Heart left ventricle (tissue), 16 donors: ENCODE measurements at regions of chr6 and their contacts with region 1.

Region 1: GRCh38 chr6:68975064-68975463 is 340.0 kb downstream of the ADGRB3 start:
- DNase-seq: peak in 4 of 5 donors; percentile 25 to 54 (median 37)
- ATAC-seq: peak; percentile 84 to 93 (median 88)
- H3K4me3 ChIP-seq: no peak overlapping the region
- H3K27ac ChIP-seq: no peak overlapping the region
- H3K4me1 ChIP-seq: peaks cover 0 to 8% (median 0%) of the 10 kb centered on the region in 12 donors
- H3K27me3 ChIP-seq: no peaks in the 10 kb centered on the region
- CTCF ChIP-seq: peak; percentile 11 to 57 (median 44)
- POLR2A ChIP-seq: no peak

Region 2: GRCh38 chr6:68868646-68869045 is 106.4 kb before region 1 on chr6:
- intact Hi-C with region 1: no loop called
- DNase-seq: no peak
- ATAC-seq: no peak
- H3K4me3 ChIP-seq: no peak overlapping the region
- H3K27ac ChIP-seq: no peak overlapping the region
- H3K4me1 ChIP-seq: no peaks in the 10 kb centered on the region
- H3K27me3 ChIP-seq: no peaks in the 10 kb centered on the region
- CTCF ChIP-seq: no peak
- POLR2A ChIP-seq: no peak

Region 3: GRCh38 chr6:69138893-69139494 is 163.9 kb after region 1 on chr6:
- intact Hi-C with region 1: loop called in 1 of 10 experiments (anchors 10 kb)
- DNase-seq: peak in 4 of 5 donors; percentile 20 to 64 (median 44)
- ATAC-seq: peak; percentile 86 to 90 (median 86)
- H3K4me3 ChIP-seq: peak overlapping the region in 7 of 12 donors; percentile 8 to 36 (median 23)
- H3K27ac ChIP-seq: peak overlapping the region; percentile 32 to 85 (median 73)
- H3K4me1 ChIP-seq: peaks cover 0 to 19% (median 2%) of the 10 kb centered on the region in 12 donors
- H3K27me3 ChIP-seq: no peaks in the 10 kb centered on the region
- CTCF ChIP-seq: no peak
- POLR2A ChIP-seq: no peak

Region 4: GRCh38 chr6:69155467-69155866 is 180.4 kb after region 1 on chr6:
- intact Hi-C with region 1: loop called in 2 of 10 experiments (anchors 10 kb)
- DNase-seq: no peak
- ATAC-seq: no peak
- H3K4me3 ChIP-seq: no peak overlapping the region
- H3K27ac ChIP-seq: no peak overlapping the region
- H3K4me1 ChIP-seq: no peaks in the 10 kb centered on the region
- H3K27me3 ChIP-seq: no peaks in the 10 kb centered on the region
- CTCF ChIP-seq: peak in 1 of 12 donors; percentile 9
- POLR2A ChIP-seq: no peak

Region 5: DNA sequence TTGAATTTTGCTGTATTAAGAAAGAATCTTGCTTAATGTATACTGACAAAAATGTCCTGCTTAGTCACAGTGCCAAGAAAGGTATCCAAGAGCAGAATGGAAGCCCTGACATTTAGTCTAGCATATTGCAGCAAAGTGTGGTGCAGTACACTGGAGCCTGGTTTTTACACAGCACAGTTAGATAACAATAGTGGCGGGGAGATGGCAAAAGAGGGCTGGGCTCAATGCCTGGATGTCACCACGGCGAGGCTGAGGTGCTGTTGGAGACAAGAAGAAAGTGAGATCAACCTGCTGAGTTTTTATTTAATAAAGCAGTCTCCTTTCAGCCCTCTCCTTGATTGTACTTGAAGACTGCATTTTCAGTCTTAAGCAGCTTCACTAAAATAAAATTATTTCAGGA is 395.7 kb after region 1 on chr6:
- intact Hi-C with region 1: loop called in 1 of 10 experiments (anchors 5 kb)
- DNase-seq: peak in 4 of 5 donors; percentile 33 to 59 (median 48)
- ATAC-seq: peak; percentile 78 to 98 (median 94)
- H3K4me3 ChIP-seq: no peak overlapping the region
- H3K27ac ChIP-seq: no peak overlapping the region
- H3K4me1 ChIP-seq: peaks cover 0 to 6% (median 0%) of the 10 kb centered on the region in 12 donors
- H3K27me3 ChIP-seq: no peaks in the 10 kb centered on the region
- CTCF ChIP-seq: no peak
- POLR2A ChIP-seq: no peak

Region 6: DNA sequence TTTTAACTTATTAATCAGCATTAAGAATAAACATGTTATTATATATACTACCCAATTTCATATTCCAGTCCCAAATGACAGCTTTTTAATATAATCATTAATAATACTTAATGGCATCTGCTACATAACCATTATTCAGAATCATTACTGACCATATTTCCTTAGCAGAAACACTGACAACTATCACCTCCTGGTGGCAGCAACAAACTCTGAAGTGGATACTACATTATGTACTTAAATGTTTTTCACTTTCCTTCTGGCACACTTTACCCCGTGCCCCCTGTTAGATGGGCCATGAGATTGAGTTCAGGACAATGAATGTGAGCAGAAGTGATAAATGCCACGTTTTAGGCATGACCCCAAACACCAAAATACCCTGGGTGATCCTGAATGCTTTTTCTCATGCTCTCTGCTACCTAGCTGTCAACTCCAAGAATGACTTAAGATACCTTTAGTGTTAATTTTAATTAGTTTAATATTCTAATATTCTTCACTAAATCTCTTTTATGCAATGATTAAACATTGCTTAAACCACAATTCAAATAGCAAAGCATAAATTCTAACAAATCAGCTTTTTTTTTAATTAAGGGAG is 744.6 kb after region 1 on chr6:
- intact Hi-C with region 1: loop called in 1 of 10 experiments (anchors 10 kb)
- DNase-seq: no peak
- ATAC-seq: no peak
- H3K4me3 ChIP-seq: no peak overlapping the region
- H3K27ac ChIP-seq: no peak overlapping the region
- H3K4me1 ChIP-seq: no peaks in the 10 kb centered on the region
- H3K27me3 ChIP-seq: no peaks in the 10 kb centered on the region
- CTCF ChIP-seq: peak in 7 of 12 donors; percentile 17 to 46 (median 28)
- POLR2A ChIP-seq: no peak

Region 7: DNA sequence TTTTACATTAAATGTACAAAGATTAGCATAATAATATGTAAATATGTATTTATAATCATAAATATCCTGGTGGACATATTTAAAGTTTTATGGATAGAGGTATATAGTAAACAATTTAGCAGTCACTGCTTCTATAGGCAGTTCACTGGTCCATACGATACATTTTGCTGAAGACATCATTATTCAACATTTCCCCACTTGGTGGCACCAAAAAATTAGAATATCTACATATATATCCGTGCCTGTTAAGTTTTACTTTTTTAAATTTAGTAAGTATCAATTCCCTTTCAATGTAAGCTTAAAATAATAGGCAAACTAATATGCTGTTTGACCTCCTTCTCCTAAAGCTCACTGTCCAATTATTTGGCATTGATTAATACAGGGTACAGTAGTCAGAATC is 757.6 kb after region 1 on chr6:
- intact Hi-C with region 1: loop called in 2 of 10 experiments (anchors 5 to 10 kb)
- DNase-seq: no peak
- ATAC-seq: no peak
- H3K4me3 ChIP-seq: no peak overlapping the region
- H3K27ac ChIP-seq: no peak overlapping the region
- H3K4me1 ChIP-seq: no peaks in the 10 kb centered on the region
- H3K27me3 ChIP-seq: no peaks in the 10 kb centered on the region
- CTCF ChIP-seq: peak in 3 of 12 donors; percentile 6 to 18 (median 7)
- POLR2A ChIP-seq: no peak